ENCODE measurements at regions of chr1 and their contacts with region 1.

Region 1: DNA sequence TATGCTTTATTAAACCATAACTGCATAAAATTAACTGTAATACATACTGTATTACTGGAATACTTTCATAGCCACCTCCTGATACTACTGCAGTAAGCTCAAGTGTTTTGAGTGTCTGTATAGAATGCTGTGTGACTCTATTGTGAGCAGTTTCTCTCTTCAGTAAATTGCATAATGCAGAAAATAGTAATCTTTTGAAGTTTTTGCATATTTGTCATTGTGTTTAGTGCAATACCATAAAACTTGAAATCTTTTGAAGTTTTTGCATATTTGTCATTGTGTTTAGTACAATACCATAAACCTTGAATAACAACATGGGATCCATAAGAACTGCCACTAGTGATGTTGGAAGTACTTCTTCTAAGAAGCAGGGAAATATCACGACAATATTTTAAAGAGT is 11.2 kb downstream of the TPR start:
- DNase-seq: no peak
- H3K4me3 ChIP-seq: no peak overlapping the region
- H3K27ac ChIP-seq: no peak overlapping the region
- H3K4me1 ChIP-seq: no peaks in the 10 kb centered on the region
- CTCF ChIP-seq: no peak

Region 2: DNA sequence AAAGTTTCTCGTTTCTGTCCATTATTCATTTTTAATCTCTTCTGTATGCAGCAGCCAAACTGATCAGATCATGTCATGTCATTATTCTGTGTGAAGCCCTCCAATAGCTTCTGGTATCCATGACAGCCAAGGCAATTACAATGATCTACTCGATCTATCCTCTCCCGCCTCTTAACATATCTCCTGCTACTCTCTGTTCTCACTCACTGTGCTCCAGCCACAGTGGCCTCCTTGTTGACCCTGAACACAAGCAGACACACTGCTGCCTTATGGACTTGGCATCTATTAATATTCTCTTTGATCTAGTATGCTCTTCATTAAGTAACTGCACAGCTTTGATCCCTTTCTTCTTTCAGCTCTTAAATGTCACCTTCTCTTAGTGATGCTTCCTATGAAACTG is 48.3 kb before region 1 on chr1:
- CTCF ChIA-PET with region 1: no interaction called
- POLR2A ChIA-PET with region 1: interaction called, 3 read pairs
- intact Hi-C with region 1: loop called (anchors 5 kb)
- DNase-seq: no peak
- H3K4me3 ChIP-seq: no peak overlapping the region
- H3K27ac ChIP-seq: no peak overlapping the region
- H3K4me1 ChIP-seq: no peaks in the 10 kb centered on the region
- CTCF ChIP-seq: no peak

Region 3: DNA sequence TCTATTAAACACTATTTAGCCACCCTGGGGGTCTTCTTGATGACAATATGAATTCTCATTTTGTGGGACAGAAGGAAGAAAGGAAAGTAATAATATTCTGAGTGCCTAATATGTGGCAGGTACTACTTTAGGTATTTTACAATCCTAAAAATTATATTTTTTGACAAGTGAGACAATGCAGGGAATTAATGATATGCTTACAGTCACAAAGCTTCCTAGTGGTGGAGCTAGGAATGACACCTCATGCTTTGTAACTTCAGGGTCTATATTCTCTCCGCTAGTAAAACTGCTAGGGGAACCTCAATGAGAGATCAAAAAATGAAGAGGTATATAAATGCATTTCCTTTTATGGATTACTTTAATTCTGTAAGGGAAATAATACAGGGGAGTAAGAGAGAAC is 33.1 kb before region 1 on chr1:
- CTCF ChIA-PET with region 1: no interaction called
- POLR2A ChIA-PET with region 1: interaction called, 11 read pairs
- intact Hi-C with region 1: no loop called
- DNase-seq: no peak
- H3K4me3 ChIP-seq: no peak overlapping the region
- H3K27ac ChIP-seq: no peak overlapping the region
- H3K4me1 ChIP-seq: no peaks in the 10 kb centered on the region
- CTCF ChIP-seq: peak; percentile 70

Region 4: GRCh38 chr1:186648613-186649012 is 284.7 kb after region 1 on chr1:
- CTCF ChIA-PET with region 1: no interaction called
- POLR2A ChIA-PET with region 1: no interaction called
- intact Hi-C with region 1: no loop called
- DNase-seq: no peak
- H3K4me3 ChIP-seq: no peak overlapping the region
- H3K27ac ChIP-seq: no peak overlapping the region
- H3K4me1 ChIP-seq: no peaks in the 10 kb centered on the region
- CTCF ChIP-seq: no peak

Measured in OCI-LY7 (cell line).